PC-3 (cell line): ENCODE measurements at regions of chr3 and their contacts with region 1.

Region 1: GRCh38 chr3:77449459-77450350 is 409.8 kb downstream of the ROBO2 start:
- DNase-seq: peak; percentile 23
- ATAC-seq: peak; percentile 58
- H3K4me3 ChIP-seq: no peak overlapping the region
- H3K27ac ChIP-seq: no peak overlapping the region
- H3K4me1 ChIP-seq: no peaks in the 10 kb centered on the region
- H3K27me3 ChIP-seq: no peaks in the 10 kb centered on the region
- CTCF ChIP-seq: no peak

Region 2: GRCh38 chr3:77467702-77468625 is 18.3 kb after region 1 on chr3:
- CTCF ChIA-PET with region 1: no interaction called
- POLR2A ChIA-PET with region 1: no interaction called
- intact Hi-C with region 1: loop called (anchors 2 kb)
- DNase-seq: no peak
- ATAC-seq: no peak
- H3K4me3 ChIP-seq: no peak overlapping the region
- H3K27ac ChIP-seq: no peak overlapping the region
- H3K4me1 ChIP-seq: no peaks in the 10 kb centered on the region
- H3K27me3 ChIP-seq: no peaks in the 10 kb centered on the region
- CTCF ChIP-seq: no peak

Region 3: DNA sequence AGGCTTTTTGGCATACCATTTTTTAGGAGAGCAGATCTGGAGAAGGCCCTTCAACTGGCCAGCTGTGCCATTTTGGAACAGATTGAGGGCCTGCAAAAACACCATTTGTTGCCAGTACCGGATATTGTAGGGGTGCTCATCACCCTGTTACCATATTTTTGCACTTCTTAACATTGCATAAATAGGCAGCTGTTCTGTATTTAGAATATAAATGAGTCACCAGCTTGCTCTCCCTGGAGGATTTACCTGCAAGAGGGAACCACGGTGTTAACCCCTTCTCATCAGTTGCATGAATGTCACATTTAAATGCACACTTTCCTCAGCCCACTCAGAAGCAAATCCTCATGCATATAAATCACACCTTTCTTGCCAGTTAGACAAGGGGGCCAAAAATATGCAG is 25.8 kb after region 1 on chr3:
- CTCF ChIA-PET with region 1: interaction called, 16 read pairs
- POLR2A ChIA-PET with region 1: no interaction called
- intact Hi-C with region 1: loop called (anchors 2 kb)
- DNase-seq: no peak
- ATAC-seq: peak; percentile 42; the same call in 1 of the 2 replicates
- H3K4me3 ChIP-seq: no peak overlapping the region
- H3K27ac ChIP-seq: no peak overlapping the region
- H3K4me1 ChIP-seq: no peaks in the 10 kb centered on the region
- H3K27me3 ChIP-seq: peaks cover 21% of the 10 kb centered on the region
- CTCF ChIP-seq: no peak

Region 4: DNA sequence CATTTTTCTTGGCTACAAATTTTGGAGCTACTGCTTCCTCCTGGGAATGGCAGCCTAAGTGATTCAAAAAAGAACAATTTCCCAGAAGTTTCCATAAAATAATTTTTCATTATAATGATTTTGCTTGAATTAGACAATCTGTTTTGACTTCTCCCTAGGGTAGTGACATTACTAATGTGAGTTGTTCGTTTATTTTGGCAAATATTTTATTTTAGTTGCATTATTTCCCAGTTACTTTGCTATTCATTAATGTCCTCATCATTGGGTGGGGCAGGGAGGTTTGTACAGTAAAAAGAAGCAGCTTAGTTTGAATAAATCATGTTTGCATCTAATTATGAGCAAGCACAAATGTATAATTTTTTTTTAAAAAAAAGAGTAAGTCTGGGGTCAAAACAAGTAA is 276.8 kb after region 1 on chr3:
- CTCF ChIA-PET with region 1: no interaction called
- POLR2A ChIA-PET with region 1: no interaction called
- intact Hi-C with region 1: no loop called
- DNase-seq: no peak
- ATAC-seq: 0 out of 2 replicates have a peak, but pooled peaks have one; percentile 49
- H3K4me3 ChIP-seq: no peak overlapping the region
- H3K27ac ChIP-seq: no peak overlapping the region
- H3K4me1 ChIP-seq: no peaks in the 10 kb centered on the region
- H3K27me3 ChIP-seq: no peaks in the 10 kb centered on the region
- CTCF ChIP-seq: no peak